SK-N-SH (cell line): ENCODE measurements at regions of chr14 and their contacts with region 1.

Region 1: DNA sequence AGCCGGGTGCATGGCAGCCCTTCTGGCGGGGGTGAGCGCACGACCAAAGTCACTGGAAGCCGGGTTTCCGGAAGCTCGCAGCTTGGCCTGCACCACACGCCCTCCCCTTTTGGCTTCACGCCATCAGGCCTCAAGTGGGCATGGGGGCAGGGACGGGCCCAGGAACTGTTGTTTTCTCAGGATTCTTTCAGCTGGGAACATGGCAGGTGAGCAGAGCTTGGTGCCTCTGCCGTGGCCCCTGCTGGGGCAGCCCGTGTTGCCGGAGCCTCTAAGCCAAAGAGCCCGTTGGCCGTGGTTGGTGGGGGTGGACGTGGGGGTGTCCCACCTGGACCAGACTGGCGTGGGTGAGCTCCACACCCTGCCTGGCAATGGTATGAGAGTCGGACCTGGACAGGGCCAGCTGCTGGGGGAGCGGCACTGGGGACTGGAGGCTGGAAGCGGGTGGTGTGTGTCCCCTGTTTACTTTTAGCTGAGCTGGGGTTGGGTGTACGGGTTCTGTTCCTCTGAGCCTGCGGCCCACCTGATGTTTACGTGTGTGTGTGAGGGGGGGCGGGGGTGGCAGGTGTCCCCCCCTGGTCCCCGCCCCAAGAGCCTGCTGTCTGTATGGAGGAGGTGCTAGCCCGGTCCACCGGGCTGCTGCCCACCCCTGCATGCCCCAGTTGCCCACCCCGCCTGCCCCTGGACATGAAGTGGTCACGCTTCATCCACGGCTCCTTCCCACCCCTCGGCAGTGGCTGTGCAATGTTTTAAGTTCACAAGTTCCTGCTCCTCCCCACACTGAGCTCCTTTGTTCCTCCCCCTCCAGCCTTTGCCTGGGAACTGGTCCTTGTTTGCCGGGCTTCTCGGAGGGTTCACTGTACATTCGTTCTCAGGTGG is 28.7 kb upstream of the PLD4 start:
- DNase-seq: peak; percentile 61
- H3K4me3 ChIP-seq: no peak overlapping the region
- H3K27ac ChIP-seq: no peak overlapping the region
- H3K4me1 ChIP-seq: peaks cover 0 to 6% of the 10 kb centered on the region in 2 experiments; a peak in 1 of 4 replicates
- H3K27me3 ChIP-seq: no peaks in the 10 kb centered on the region
- CTCF ChIP-seq: no peak
- EP300 ChIP-seq: no peak
- RAD21 ChIP-seq: no peak

Region 2: GRCh38 chr14:104633276-104634137 is 262.5 kb before region 1 on chr14:
- CTCF ChIA-PET with region 1: no interaction called
- POLR2A ChIA-PET with region 1: no interaction called
- DNase-seq: peak; percentile 51
- H3K4me3 ChIP-seq: no peak overlapping the region
- H3K27ac ChIP-seq: peak overlapping the region in 1 of 2 experiments; percentile 14; a peak in 1 of 4 replicates
- H3K4me1 ChIP-seq: peaks cover 0 to 8% of the 10 kb centered on the region in 2 experiments; a peak in 2 of 4 replicates
- H3K27me3 ChIP-seq: no peaks in the 10 kb centered on the region
- CTCF ChIP-seq: no peak
- EP300 ChIP-seq: no peak
- RAD21 ChIP-seq: no peak; the same call in 1 of the 2 replicates

Region 3: DNA sequence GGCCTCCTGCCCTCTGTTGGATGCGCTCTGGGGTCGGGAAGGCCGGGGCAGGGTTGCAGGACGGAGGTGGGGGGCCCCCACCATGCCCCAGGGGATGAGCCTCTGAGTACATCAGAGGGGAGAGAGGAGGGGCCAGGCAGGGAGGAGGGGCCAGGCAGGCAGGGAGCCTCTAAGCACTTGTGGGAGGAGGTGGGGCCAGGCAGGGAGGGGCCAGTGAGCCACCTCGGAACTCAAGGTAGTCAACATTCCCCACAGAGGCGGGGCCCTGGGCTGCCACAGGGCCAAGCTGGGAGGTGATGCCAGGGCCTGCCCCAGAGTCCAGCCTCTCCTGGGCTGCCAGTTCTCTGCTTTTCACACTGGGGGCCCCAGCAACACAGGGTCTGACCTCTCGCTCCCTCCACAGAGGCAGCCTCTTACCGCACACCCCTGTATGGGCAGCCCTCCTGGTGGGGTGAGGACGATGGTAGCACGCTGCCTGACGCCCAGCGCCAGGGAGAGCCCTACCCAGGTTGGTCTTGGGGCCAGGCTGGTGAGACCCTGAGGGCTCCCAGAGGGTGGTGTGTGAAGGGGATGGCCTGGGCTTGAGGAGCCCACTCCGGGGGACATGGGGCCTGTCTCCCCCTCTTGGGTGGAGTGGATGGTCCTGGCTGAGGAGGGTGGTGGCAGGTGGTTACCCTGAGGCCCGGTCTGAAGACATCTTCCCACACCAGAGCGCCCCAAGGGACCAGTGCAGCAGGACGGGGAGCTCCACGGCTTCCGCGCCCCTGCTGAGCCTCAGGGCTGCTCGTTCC is 13.5 kb before region 1 on chr14:
- CTCF ChIA-PET with region 1: interaction called, 14 read pairs
- POLR2A ChIA-PET with region 1: interaction called, 3 read pairs
- DNase-seq: peak; percentile 55
- H3K4me3 ChIP-seq: no peak overlapping the region
- H3K27ac ChIP-seq: peak overlapping the region in 1 of 2 experiments; percentile 86; a peak in 2 of 4 replicates
- H3K4me1 ChIP-seq: peaks cover 0 to 27% of the 10 kb centered on the region in 2 experiments; a peak in 1 of 4 replicates
- H3K27me3 ChIP-seq: no peaks in the 10 kb centered on the region
- CTCF ChIP-seq: no peak
- EP300 ChIP-seq: no peak
- RAD21 ChIP-seq: no peak